Natural killer cell (primary cell): ENCODE measurements at regions of chr11 and their contacts with region 1.

Region 1: GRCh38 chr11:66222358-66223149 is 45.9 kb upstream of the RAB1B start:
- DNase-seq: peak; percentile 91 to 99
- ATAC-seq: peak; percentile 98 to 100 (median 98)
- H3K4me3 ChIP-seq: no peak overlapping the region
- H3K4me3 Mint-ChIP-seq: no peak overlapping the region
- H3K27ac ChIP-seq: peak overlapping the region; percentile 90
- H3K27ac Mint-ChIP-seq: peak overlapping the region; percentile 93 to 96
- H3K4me1 ChIP-seq: peaks cover 14% of the 10 kb centered on the region
- H3K4me1 Mint-ChIP-seq: peaks cover 18 to 19% of the 10 kb centered on the region in 2 donors
- H3K27me3 ChIP-seq: no peaks in the 10 kb centered on the region
- H3K27me3 Mint-ChIP-seq: no peaks in the 10 kb centered on the region
- CTCF ChIP-seq: peak; percentile 99

Region 2: GRCh38 chr11:66258473-66258893 is 35.9 kb after region 1 on chr11:
- intact Hi-C with region 1: loop called (anchors 1 kb)
- DNase-seq: no peak
- ATAC-seq: peak in 1 of 3 donors; percentile 0
- H3K4me3 ChIP-seq: peak overlapping the region; percentile 96
- H3K4me3 Mint-ChIP-seq: peak overlapping the region; percentile 80
- H3K27ac ChIP-seq: peak overlapping the region; percentile 86
- H3K27ac Mint-ChIP-seq: peak overlapping the region; percentile 52 to 93
- H3K4me1 ChIP-seq: peaks cover 20% of the 10 kb centered on the region
- H3K4me1 Mint-ChIP-seq: peaks cover 20 to 28% of the 10 kb centered on the region in 2 donors
- H3K27me3 ChIP-seq: no peaks in the 10 kb centered on the region
- H3K27me3 Mint-ChIP-seq: no peaks in the 10 kb centered on the region
- CTCF ChIP-seq: peak; percentile 45

Region 3: GRCh38 chr11:66282468-66283386 is 60.2 kb after region 1 on chr11:
- intact Hi-C with region 1: loop called (anchors 1 kb)
- DNase-seq: peak; percentile 99 to 100
- ATAC-seq: peak; percentile 80 to 95 (median 86)
- H3K4me3 ChIP-seq: no peak overlapping the region
- H3K4me3 Mint-ChIP-seq: peak overlapping the region; percentile 50
- H3K27ac ChIP-seq: peak overlapping the region; percentile 19
- H3K27ac Mint-ChIP-seq: peak overlapping the region; percentile 74 to 89
- H3K4me1 ChIP-seq: peaks cover 38% of the 10 kb centered on the region
- H3K4me1 Mint-ChIP-seq: peaks cover 5 to 50% of the 10 kb centered on the region in 2 donors
- H3K27me3 ChIP-seq: peaks cover 10% of the 10 kb centered on the region
- H3K27me3 Mint-ChIP-seq: peaks cover 7 to 14% of the 10 kb centered on the region in 2 donors
- CTCF ChIP-seq: peak; percentile 92

Region 4: DNA sequence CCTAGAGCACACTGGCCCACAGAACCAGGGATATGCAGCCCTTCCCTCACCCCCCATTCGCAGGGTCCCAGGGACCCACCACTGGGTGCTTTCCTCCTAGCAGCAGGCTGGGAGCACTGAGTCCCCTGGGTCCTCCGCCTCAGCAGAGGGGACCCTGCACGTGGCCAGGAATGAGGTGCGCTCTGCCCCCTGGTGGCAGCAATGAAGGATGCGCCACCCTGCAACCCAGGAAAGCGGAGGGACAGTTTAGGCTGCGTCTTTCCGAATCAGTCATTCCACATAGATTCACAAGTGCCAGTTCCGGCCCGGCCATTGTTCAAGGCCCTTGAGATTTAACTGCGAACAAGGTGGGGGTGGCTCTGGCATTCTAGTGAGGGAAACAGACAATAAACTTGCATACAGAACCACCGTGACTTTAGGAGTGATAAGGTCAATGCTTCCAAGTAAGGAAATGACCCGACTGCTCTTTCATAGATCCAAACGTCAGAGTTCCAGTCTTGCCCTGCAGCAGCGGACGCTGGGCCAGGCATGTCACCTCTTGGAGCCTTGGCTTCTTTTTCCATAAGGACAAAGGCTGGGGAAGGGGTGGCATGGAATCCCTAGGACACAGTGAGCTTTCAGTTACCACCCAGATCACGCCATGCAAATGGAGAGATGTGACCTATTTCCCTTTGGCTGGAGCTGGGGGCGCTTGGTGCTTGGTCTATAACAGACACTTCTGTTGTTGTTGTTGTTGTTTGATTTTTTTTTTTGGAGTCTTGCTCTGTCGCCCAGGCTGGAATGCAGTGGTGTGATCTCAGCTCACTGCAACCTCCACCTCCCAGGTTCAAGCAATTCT is 106.0 kb after region 1 on chr11:
- intact Hi-C with region 1: loop called (anchors 1 kb)
- DNase-seq: peak; percentile 79 to 93
- ATAC-seq: peak; percentile 69 to 82 (median 75)
- H3K4me3 ChIP-seq: no peak overlapping the region
- H3K4me3 Mint-ChIP-seq: peak overlapping the region; percentile 74
- H3K27ac ChIP-seq: peak overlapping the region; percentile 14
- H3K27ac Mint-ChIP-seq: peak overlapping the region; percentile 19 to 74
- H3K4me1 ChIP-seq: peaks cover 40% of the 10 kb centered on the region
- H3K4me1 Mint-ChIP-seq: peaks cover 19 to 36% of the 10 kb centered on the region in 2 donors
- H3K27me3 ChIP-seq: peaks cover 3% of the 10 kb centered on the region
- H3K27me3 Mint-ChIP-seq: peaks cover 8 to 9% of the 10 kb centered on the region in 2 donors
- CTCF ChIP-seq: peak; percentile 96

Region 5: GRCh38 chr11:66386171-66387069 is 163.9 kb after region 1 on chr11:
- intact Hi-C with region 1: loop called (anchors 5 kb)
- DNase-seq: peak; percentile 73 to 90
- ATAC-seq: peak; percentile 74 to 79 (median 77)
- H3K4me3 ChIP-seq: no peak overlapping the region
- H3K4me3 Mint-ChIP-seq: peak overlapping the region; percentile 13
- H3K27ac ChIP-seq: no peak overlapping the region
- H3K27ac Mint-ChIP-seq: peak overlapping the region in 1 of 2 donors; percentile 47
- H3K4me1 ChIP-seq: peaks cover 9% of the 10 kb centered on the region
- H3K4me1 Mint-ChIP-seq: peaks cover 6 to 8% of the 10 kb centered on the region in 2 donors
- H3K27me3 ChIP-seq: no peaks in the 10 kb centered on the region
- H3K27me3 Mint-ChIP-seq: peaks cover 0 to 7% of the 10 kb centered on the region in 2 donors
- CTCF ChIP-seq: peak; percentile 82